OCI-LY7 (cell line): ENCODE measurements at regions of chr7 and their contacts with region 1.

Region 1: DNA sequence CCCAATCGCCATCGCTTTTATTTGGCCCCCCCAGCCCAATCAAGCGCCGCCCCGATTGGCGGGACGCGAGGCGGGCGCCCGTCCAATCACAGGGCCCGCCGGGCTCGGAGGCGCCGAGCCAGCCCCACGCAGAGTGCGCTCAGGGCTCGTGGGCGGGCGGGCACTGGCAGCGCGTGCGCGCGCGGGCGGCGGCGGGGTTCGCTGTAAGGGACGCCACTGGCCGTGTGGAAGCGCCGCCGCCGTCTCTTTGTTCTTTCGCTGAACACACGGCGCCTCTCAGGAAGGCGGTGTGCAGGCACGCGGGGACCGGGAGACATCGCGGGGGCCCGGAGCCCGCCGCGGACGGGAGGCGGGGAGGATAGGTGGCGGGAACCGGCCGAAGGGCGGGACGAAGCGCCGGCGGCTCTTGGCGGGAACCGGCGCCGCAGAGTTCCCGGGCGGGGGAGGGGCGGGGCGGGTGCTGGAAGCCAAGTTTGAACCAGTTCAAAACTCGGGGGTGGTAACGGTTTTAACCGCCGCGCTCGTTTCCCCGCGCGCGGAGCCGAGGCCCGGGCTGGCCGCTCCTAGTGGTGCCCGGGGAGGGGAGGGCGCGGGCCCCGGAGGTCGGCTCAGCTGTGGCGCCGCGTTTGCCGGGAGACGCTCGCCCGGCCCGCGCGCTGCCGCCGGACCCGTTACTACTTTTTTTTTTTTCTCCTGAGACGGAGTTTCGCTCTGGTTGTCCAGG is 370 bp upstream of the EZH2 start:
- DNase-seq: peak; percentile 96
- H3K4me3 ChIP-seq: peak overlapping the region; percentile 91
- H3K27ac ChIP-seq: peak overlapping the region; percentile 88
- H3K4me1 ChIP-seq: peaks cover 25% of the 10 kb centered on the region
- CTCF ChIP-seq: no peak

Region 2: GRCh38 chr7:148670807-148671206 is 213.7 kb before region 1 on chr7:
- CTCF ChIA-PET with region 1: no interaction called
- POLR2A ChIA-PET with region 1: no interaction called
- intact Hi-C with region 1: no loop called
- DNase-seq: no peak
- H3K4me3 ChIP-seq: no peak overlapping the region
- H3K27ac ChIP-seq: no peak overlapping the region
- H3K4me1 ChIP-seq: no peaks in the 10 kb centered on the region
- CTCF ChIP-seq: no peak

Region 3: DNA sequence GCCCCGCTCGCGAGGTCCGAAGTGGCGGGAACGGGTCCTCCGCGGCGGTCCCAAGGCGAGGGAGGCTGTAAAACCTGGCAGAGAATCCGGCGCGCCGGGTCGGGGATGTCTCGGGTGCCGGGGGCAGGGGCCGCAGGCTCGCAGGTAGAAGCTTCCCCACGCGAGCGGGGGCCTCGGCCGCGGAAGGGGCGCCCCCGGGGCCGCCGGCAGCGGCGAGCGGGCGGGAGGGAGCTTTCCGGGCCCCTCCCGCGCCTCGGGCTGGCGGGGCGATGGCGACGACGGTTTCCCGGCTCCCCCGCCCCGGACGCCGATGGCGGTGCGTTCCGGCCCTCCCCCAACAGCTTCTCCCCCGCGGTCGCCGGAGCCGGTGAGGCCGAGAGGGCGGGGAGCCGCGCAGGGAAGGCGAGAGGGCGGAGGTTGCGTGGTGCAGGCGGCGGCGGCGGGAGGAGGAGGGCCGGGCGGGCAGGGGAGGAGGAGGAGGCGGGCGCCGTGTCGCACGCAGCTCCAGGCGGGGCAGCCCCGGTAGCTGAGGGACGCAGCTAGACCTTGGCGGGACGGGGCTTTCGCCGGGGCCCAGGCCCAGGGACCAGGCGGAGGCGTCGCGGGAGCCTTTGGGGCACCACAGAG is 186.0 kb before region 1 on chr7 and contains the start of gene CUL1:
- CTCF ChIA-PET with region 1: no interaction called
- POLR2A ChIA-PET with region 1: interaction called, 3 read pairs
- intact Hi-C with region 1: loop called (anchors 2 kb)
- DNase-seq: peak; percentile 84
- H3K4me3 ChIP-seq: peak within 1 kb of the TSS; percentile 83
- H3K27ac ChIP-seq: peak within 1 kb of the TSS; percentile 69
- H3K4me1 ChIP-seq: peaks cover 32% of the 10 kb centered on the region
- CTCF ChIP-seq: no peak
- total RNA-seq, gene CUL1: 36.7 and 40.5 TPM in 2 replicates

Region 4: DNA sequence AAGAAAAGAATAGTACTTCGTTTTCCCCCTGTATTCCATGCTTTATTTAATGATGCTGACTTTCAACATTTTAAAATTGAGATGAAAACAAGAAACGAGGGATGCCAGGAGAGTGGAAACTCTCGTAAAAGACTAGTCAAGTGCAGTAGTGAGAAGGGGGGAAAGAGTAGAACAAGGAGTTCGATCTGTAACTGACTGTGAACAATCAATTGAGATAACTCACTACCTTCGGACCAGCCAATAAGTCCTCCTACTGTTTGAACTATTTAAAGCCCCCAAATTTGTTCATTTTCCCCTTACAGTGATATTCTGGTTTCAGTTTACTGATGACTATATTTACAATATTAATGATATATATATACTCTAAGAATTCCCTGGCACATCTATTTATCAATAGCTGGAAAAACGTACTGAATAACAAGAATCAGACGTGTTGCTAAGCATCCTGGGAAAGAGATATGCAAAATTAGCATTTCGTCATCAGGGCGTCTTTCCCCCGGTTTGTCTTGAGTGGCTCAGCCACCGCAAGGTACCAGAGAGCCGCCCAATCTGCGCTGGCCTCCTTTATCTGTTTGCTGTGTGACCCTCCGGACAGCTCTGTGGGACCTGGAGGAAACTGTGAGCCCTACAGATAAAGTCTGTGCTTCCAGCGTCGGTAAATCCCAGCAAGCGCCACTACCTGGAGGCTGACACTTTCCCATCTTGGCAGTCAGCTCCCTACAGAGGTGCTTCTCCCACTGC is 102.7 kb after region 1 on chr7:
- CTCF ChIA-PET with region 1: no interaction called
- POLR2A ChIA-PET with region 1: interaction called, 3 read pairs
- intact Hi-C with region 1: loop called (anchors 1 kb)
- DNase-seq: peak; percentile 94
- H3K4me3 ChIP-seq: peak overlapping the region; percentile 87
- H3K27ac ChIP-seq: peak overlapping the region; percentile 46
- H3K4me1 ChIP-seq: peaks cover 22% of the 10 kb centered on the region
- CTCF ChIP-seq: no peak